Sciatic nerve (tissue), 2 donors: ENCODE measurements at regions of chr20 and their contacts with region 1.

Region 1: GRCh38 chr20:61537239-61538182 is 285.4 kb downstream of the CDH4 start:
- DNase-seq: no peak
- ATAC-seq: no peak

Region 2: GRCh38 chr20:61581825-61582188 is 44.3 kb after region 1 on chr20:
- intact Hi-C with region 1: loop called (anchors 1 kb)
- DNase-seq: no peak
- ATAC-seq: no peak